BJ (cell line): ENCODE measurements at regions of chr6 and their contacts with region 1.

Region 1: GRCh38 chr6:100088009-100088408 is 94.0 kb upstream of the MCHR2 start:
- DNase-seq: peak; percentile 95
- H3K4me3 ChIP-seq: no peak overlapping the region
- H3K27me3 ChIP-seq: no peaks in the 10 kb centered on the region
- CTCF ChIP-seq: no peak

Region 2: DNA sequence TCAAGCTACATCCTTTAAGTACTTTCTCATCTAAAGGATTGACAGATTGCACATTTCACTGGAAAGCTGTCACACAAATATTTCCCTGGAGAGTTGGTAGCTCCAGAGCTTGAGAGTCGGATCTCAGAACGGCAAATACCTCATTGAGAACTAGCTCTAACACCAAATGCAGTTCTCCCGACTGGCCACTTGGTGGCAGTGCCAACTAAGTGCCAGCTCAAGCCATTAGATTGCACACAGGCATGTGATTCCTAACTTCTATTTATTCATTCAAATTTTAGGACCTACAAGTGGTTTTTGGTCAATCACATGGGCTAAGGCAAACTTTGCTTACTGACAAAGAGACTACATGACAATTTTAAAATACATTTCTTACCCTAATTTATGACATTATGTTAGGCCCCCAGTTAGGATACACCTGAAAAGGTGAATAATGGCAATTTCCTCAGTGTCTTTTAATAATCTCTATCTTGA is 86.1 kb before region 1 on chr6:
- CTCF ChIA-PET with region 1: interaction called, 14 read pairs
- POLR2A ChIA-PET with region 1: no interaction called
- DNase-seq: no peak
- H3K4me3 ChIP-seq: no peak overlapping the region
- H3K27me3 ChIP-seq: no peaks in the 10 kb centered on the region
- CTCF ChIP-seq: peak; percentile 94